Esophagus squamous epithelium (tissue), 5 donors: ENCODE measurements at regions of chr2 and their contacts with region 1.

Region 1: DNA sequence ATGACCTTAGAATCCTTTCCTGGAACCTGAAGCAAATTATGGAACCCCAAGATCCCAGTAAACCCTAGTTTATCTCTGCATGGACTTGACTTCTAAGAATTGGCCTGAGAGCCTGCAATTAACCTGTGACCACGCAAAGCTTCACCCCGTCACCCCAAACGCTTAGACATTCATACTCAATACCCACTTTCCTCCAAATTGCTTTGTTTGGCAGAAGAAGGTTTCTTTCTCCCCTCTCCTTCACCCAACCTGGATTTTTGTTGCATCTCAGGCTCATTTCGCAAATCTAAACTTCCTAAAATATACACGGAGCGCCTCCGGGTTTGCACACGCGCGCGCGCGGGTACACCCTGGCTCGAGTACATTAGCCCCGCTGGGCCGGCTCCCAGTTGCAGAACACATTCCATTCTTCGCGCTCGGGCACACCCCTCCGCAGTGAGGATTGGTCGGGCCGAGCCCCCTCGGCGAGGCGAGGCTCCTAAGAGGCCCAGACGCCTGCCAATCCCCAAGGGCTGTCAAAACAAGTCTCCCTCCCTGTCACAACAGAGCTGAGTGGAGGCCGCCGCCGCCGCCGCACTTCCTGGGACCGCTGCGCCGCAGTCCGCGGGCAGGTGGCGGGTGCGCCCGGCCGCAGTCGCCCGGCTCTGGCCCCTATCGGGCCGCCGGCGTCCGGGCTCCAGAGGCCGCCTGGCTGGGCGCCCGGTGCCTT is at the start of gene PLCL1:
- DNase-seq: peak; percentile 41
- H3K4me3 ChIP-seq: peak within 1 kb of the TSS; percentile 56 to 81 (median 78)
- H3K27ac ChIP-seq: peak within 1 kb of the TSS; percentile 38 to 84 (median 78)
- H3K4me1 ChIP-seq: peaks cover 9 to 35% (median 18%) of the 10 kb centered on the region in 3 donors
- H3K27me3 ChIP-seq: peaks cover 0 to 35% (median 0%) of the 10 kb centered on the region in 4 donors
- CTCF ChIP-seq: peak in 1 of 6 experiments; percentile 5
- POLR2A ChIP-seq: peak in 3 of 4 donors; percentile 14 to 73 (median 48)
- total RNA-seq, gene PLCL1: 0.34 to 4.2 (median 1.2) TPM

Region 2: DNA sequence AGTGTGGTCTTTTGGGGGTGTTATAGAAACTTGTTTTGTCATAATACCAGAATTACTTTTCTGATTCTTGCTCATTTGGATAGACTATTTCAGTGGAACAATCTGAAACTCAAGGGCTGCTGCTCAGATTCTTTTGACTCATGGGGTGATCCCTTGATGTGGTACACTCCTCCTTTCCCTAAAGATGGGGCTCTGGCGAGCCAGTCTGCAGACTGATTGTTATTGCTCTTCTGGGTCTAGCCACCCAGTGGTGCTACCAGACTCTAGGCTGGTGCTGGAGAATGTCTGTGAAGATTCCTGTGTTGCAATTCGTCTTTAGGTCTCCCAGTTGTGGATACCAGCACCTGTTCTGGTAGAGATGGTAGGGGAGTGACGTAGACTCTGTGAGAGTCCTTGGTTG is 103.2 kb before region 1 on chr2:
- intact Hi-C with region 1: no loop called
- DNase-seq: no peak
- H3K4me3 ChIP-seq: no peak overlapping the region
- H3K27ac ChIP-seq: no peak overlapping the region
- H3K4me1 ChIP-seq: peaks cover 0 to 13% (median 2%) of the 10 kb centered on the region in 3 donors
- H3K27me3 ChIP-seq: no peaks in the 10 kb centered on the region
- CTCF ChIP-seq: no peak
- POLR2A ChIP-seq: no peak

Region 3: GRCh38 chr2:198135481-198135934 is 331.3 kb after region 1 on chr2:
- intact Hi-C with region 1: loop called (anchors 5 kb)
- DNase-seq: no peak
- H3K4me3 ChIP-seq: no peak overlapping the region
- H3K27ac ChIP-seq: no peak overlapping the region
- H3K4me1 ChIP-seq: no peaks in the 10 kb centered on the region
- H3K27me3 ChIP-seq: no peaks in the 10 kb centered on the region
- CTCF ChIP-seq: no peak
- POLR2A ChIP-seq: no peak

Region 4: GRCh38 chr2:198296665-198297308 is 492.6 kb after region 1 on chr2:
- intact Hi-C with region 1: loop called (anchors 5 kb)
- DNase-seq: no peak
- H3K4me3 ChIP-seq: no peak overlapping the region
- H3K27ac ChIP-seq: no peak overlapping the region
- H3K4me1 ChIP-seq: no peaks in the 10 kb centered on the region
- H3K27me3 ChIP-seq: peaks cover 0 to 5% (median 0%) of the 10 kb centered on the region in 4 donors
- CTCF ChIP-seq: peak; percentile 59 to 83 (median 69)
- POLR2A ChIP-seq: no peak